SK-N-SH (cell line): ENCODE measurements at regions of chr19 and their contacts with region 1.

Region 1: DNA sequence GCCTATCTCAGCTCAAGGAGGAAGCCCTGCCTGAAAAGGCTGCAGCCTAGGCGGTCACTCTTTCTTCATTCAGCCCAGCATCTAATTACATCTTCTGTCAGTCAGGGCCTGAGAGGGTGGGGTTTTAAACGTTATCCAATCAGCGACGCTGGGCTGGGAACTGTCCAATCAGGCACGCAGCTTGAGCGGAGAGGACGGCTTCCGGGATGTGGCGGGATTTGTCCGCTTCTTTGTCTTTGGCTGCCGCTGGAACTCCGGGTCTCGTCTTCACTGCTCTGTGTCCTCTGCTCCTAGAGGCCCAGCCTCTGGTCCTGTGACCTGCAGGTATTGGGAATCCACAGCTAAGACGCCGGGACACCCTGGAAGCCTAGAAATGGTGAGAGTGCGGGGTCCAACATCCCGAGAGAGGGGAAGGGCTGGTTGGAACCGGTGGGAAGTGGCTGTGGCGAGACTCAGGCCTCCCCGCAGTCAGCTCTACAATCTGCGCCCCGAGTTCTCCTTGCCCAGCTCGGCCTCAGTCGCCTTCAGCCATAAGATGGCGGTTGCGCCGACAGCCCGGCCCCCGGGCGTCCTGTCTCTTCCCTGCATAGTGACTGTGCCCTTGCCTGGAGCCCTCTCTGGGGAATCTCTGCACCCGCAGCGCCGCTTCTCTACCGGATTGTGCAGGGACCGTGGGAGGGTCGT is at the start of gene ZNF738:
- DNase-seq: peak; percentile 82
- H3K4me3 ChIP-seq: peak within 1 kb of the TSS; percentile 72 to 78
- H3K27ac ChIP-seq: peak within 1 kb of the TSS; percentile 76 to 77
- H3K4me1 ChIP-seq: no peaks in the 10 kb centered on the region
- H3K27me3 ChIP-seq: no peaks in the 10 kb centered on the region
- CTCF ChIP-seq: no peak
- EP300 ChIP-seq: no peak
- RAD21 ChIP-seq: no peak
- polyA plus RNA-seq, gene ZNF738: 8.1 and 12.8 TPM in 2 replicates

Region 2: DNA sequence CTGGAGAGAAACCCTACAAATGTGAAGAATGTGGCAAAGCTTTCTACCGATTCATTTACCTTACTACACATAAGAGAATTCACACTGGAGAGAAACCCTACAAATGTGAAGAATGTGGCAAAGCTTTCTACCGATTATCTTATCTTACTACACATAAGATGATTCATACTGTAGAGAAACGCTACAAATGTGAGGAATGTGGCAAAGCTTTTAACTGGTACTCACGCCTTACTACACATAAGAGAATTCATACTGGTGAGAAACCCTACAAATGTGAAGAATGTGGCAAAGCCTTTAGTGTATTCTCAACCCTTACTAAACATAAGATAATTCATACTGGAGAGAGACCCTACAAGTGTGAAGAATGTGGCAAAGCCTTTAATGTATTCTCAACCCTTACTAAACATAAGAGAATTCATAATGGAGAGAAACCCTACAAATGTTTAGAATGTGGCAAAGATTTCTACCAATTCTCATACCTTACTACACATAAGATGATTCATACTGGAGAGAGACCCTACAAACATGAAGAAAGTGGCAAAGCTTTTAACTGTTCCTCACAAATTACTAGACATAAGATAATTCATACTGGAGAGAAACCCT is 25.2 kb after region 1 on chr19:
- CTCF ChIA-PET with region 1: no interaction called
- POLR2A ChIA-PET with region 1: no interaction called
- DNase-seq: no peak
- H3K4me3 ChIP-seq: no peak overlapping the region
- H3K27ac ChIP-seq: no peak overlapping the region
- H3K4me1 ChIP-seq: no peaks in the 10 kb centered on the region
- H3K27me3 ChIP-seq: no peaks in the 10 kb centered on the region
- CTCF ChIP-seq: no peak
- EP300 ChIP-seq: no peak
- RAD21 ChIP-seq: no peak

Region 3: GRCh38 chr19:21396893-21397572 is 38.1 kb after region 1 on chr19 and contains the start of gene ZNF493:
- CTCF ChIA-PET with region 1: no interaction called
- POLR2A ChIA-PET with region 1: interaction called, 11 read pairs
- DNase-seq: peak; percentile 82
- H3K4me3 ChIP-seq: peak within 1 kb of the TSS; percentile 77 to 80
- H3K27ac ChIP-seq: peak within 1 kb of the TSS; percentile 31 to 84; a peak in 3 of 4 replicates
- H3K4me1 ChIP-seq: peaks cover 0 to 6% of the 10 kb centered on the region in 2 experiments; a peak in 2 of 4 replicates
- H3K27me3 ChIP-seq: no peaks in the 10 kb centered on the region
- CTCF ChIP-seq: no peak
- EP300 ChIP-seq: peak in 1 of 2 experiments; percentile 36; a peak in 1 of 4 replicates
- RAD21 ChIP-seq: no peak
- polyA plus RNA-seq, gene ZNF493: 3.7 and 5.5 TPM in 2 replicates